Testis (tissue), 5 donors: ENCODE measurements at regions of chr11 and their contacts with region 1.

Region 1: GRCh38 chr11:43944761-43945311 is 2.4 kb downstream of the C11orf96 start:
- DNase-seq: peak; percentile 95
- H3K4me3 ChIP-seq: peak overlapping the region; percentile 86 to 91
- H3K27ac ChIP-seq: peak overlapping the region; percentile 94 to 97
- H3K4me1 ChIP-seq: peaks cover 15% of the 10 kb centered on the region
- H3K27me3 ChIP-seq: no peaks in the 10 kb centered on the region
- CTCF ChIP-seq: peak; percentile 89 to 96 (median 93)
- POLR2A ChIP-seq: no peak

Region 2: GRCh38 chr11:44005063-44005701 is 60.3 kb after region 1 on chr11:
- intact Hi-C with region 1: loop called (anchors 10 kb)
- DNase-seq: peak; percentile 58
- H3K4me3 ChIP-seq: no peak overlapping the region
- H3K27ac ChIP-seq: peak overlapping the region; percentile 71 to 79
- H3K4me1 ChIP-seq: peaks cover 60% of the 10 kb centered on the region
- H3K27me3 ChIP-seq: no peaks in the 10 kb centered on the region
- CTCF ChIP-seq: no peak
- POLR2A ChIP-seq: no peak

Region 3: DNA sequence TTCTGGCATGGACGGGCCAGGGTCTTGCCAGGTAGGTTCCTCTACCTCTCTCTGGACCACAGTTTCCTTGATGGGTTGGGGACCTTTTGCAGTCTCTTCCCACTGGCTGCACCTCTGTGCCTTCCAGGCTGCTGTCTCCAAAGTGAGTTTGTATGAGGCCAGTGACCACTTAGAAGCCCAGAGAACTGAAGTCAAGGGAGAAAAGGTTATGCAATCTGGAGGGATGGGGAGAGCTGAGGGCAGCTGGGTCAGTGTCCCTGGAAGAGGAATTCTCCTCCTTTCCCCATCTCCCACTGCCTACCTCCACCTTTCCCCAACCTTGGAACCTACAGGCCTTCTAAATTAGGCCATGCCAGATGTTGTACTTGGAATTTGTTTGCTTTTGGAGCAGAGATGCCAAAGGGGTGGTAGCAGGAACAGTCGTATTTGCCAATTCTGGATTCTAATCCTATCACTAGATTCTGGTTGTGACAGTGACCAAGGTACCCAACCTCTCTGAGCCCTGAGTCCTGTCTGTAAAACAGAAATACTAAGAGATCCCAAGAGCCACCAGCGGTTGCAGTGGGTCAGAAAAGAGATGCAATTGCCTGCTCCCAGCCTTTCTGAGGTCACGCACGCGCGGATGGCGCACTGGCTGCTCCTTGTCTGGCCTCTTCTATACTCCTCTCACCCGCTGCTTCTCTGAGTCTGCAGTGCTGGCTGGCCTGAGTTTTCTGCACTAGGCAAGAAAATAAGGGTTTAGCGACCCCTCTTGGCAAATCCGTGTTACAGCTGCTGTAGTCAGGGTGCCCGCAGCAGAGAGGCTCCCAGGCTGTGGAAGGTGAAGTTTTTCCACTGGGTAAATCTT is 92.2 kb after region 1 on chr11:
- intact Hi-C with region 1: loop called (anchors 10 kb)
- DNase-seq: peak; percentile 94
- H3K4me3 ChIP-seq: no peak overlapping the region
- H3K27ac ChIP-seq: peak overlapping the region; percentile 31 to 47
- H3K4me1 ChIP-seq: peaks cover 22% of the 10 kb centered on the region
- H3K27me3 ChIP-seq: no peaks in the 10 kb centered on the region
- CTCF ChIP-seq: peak; percentile 71 to 82 (median 79)
- POLR2A ChIP-seq: no peak